Activated CD8-positive, alpha-beta T cell treated with anti-CD3 and anti-CD28 coated beads, Interleukin-2, amount 10 ng/mL, durations not matched to agents 7 days and 5 days (primary cell): ENCODE measurements at regions of chr1 and their contacts with region 1.

Region 1: GRCh38 chr1:89598450-89599331 is 34.2 kb upstream of the LRRC8C start:
- DNase-seq: no peak
- ATAC-seq: peak; percentile 63
- H3K4me3 Mint-ChIP-seq: no peak overlapping the region
- H3K27ac Mint-ChIP-seq: no peak overlapping the region
- H3K4me1 Mint-ChIP-seq: peaks cover 45% of the 10 kb centered on the region
- H3K27me3 Mint-ChIP-seq: no peaks in the 10 kb centered on the region

Region 2: GRCh38 chr1:89472952-89473351 is 125.7 kb before region 1 on chr1:
- CTCF ChIA-PET with region 1: no interaction called
- POLR2A ChIA-PET with region 1: no interaction called
- DNase-seq: no peak
- ATAC-seq: no peak
- H3K4me3 Mint-ChIP-seq: no peak overlapping the region
- H3K27ac Mint-ChIP-seq: no peak overlapping the region
- H3K4me1 Mint-ChIP-seq: no peaks in the 10 kb centered on the region
- H3K27me3 Mint-ChIP-seq: peaks cover 36% of the 10 kb centered on the region

Region 3: GRCh38 chr1:89578151-89578550 is 20.5 kb before region 1 on chr1:
- CTCF ChIA-PET with region 1: interaction called, 23 read pairs
- POLR2A ChIA-PET with region 1: no interaction called
- DNase-seq: no peak
- ATAC-seq: no peak
- H3K4me3 Mint-ChIP-seq: no peak overlapping the region
- H3K27ac Mint-ChIP-seq: no peak overlapping the region
- H3K4me1 Mint-ChIP-seq: peaks cover 21% of the 10 kb centered on the region
- H3K27me3 Mint-ChIP-seq: no peaks in the 10 kb centered on the region

Region 4: DNA sequence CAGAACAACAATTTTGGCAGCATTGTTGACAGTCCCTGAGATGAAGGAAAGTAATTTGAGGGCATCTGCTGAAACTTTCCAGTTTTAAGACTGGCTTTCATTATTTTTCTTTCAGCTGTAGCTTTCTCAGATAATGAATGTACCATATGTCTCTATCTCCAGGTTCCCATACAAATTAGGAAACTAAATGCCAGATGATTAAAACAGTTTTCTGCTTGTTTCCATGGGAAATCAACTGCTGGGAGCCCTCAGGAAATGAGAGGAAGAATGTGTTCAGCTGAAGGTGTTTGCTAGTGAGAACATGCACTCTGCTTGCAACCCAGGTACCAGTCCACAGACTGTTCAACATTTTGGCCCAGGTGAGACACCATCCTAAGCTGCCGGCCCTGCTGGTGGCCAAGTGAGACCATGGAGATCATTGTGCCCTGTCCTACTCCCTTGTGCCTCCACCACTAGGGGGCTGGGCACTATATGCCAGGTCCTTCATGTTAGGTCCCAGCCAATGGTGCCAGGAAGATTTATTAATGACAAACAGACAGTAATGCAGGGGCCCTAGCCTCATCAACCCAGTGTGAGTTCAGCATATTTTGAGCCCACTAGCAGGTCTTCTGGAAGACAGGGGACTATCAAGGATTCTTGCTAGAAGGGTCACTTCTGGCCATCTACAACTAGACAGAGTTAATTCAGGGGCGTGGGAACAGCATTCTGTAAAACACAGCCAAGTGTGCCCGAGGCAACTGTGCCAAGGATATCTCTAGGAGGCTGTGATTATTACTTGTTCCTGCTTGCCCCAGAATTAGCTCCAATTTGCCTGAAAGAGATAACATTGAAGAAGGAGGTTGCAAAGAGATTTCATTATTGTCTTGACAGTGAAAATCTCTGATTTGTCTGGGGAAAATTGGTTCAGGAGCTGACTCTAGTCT is 17.2 kb after region 1 on chr1:
- CTCF ChIA-PET with region 1: interaction called, 50 read pairs
- POLR2A ChIA-PET with region 1: interaction called, 15 read pairs
- DNase-seq: no peak
- ATAC-seq: no peak
- H3K4me3 Mint-ChIP-seq: no peak overlapping the region
- H3K27ac Mint-ChIP-seq: no peak overlapping the region
- H3K4me1 Mint-ChIP-seq: peaks cover 63% of the 10 kb centered on the region
- H3K27me3 Mint-ChIP-seq: no peaks in the 10 kb centered on the region